H1 (cell line): ENCODE measurements at regions of chr20 and their contacts with region 1.

Region 1: GRCh38 chr20:58209652-58210397 is 18.6 kb downstream of the ANKRD60 start:
- DNase-seq: peak in 1 of 2 experiments; percentile 98
- H3K4me3 ChIP-seq: peak overlapping the region in 1 of 4 experiments; percentile 42; a peak in 2 of 8 replicates
- H3K27ac ChIP-seq: no peak overlapping the region
- H3K4me1 ChIP-seq: no peaks in the 10 kb centered on the region
- H3K27me3 ChIP-seq: no peaks in the 10 kb centered on the region; a peak in 4 of 7 replicates
- CTCF ChIP-seq: peak; percentile 100
- EP300 ChIP-seq: no peak
- POLR2A ChIP-seq: no peak
- RAD21 ChIP-seq: peak; percentile 98 to 99

Region 2: GRCh38 chr20:57622579-57623377 is 587.0 kb before region 1 on chr20:
- CTCF ChIA-PET with region 1: interaction called, 28 read pairs
- POLR2A ChIA-PET with region 1: no interaction called
- DNase-seq: peak; percentile 38 to 90
- H3K4me3 ChIP-seq: no peak overlapping the region
- H3K27ac ChIP-seq: no peak overlapping the region
- H3K4me1 ChIP-seq: no peaks in the 10 kb centered on the region
- H3K27me3 ChIP-seq: no peaks in the 10 kb centered on the region
- CTCF ChIP-seq: peak; percentile 93 to 98 (median 95)
- EP300 ChIP-seq: no peak
- POLR2A ChIP-seq: no peak
- RAD21 ChIP-seq: peak; percentile 96 to 97

Region 3: GRCh38 chr20:58058421-58059259 is 151.2 kb before region 1 on chr20:
- CTCF ChIA-PET with region 1: interaction called, 10 read pairs
- POLR2A ChIA-PET with region 1: no interaction called
- DNase-seq: peak in 1 of 2 experiments; percentile 33
- H3K4me3 ChIP-seq: no peak overlapping the region
- H3K27ac ChIP-seq: no peak overlapping the region
- H3K4me1 ChIP-seq: peaks cover 0 to 7% (median 2%) of the 10 kb centered on the region in 4 experiments; a peak in 3 of 7 replicates
- H3K27me3 ChIP-seq: no peaks in the 10 kb centered on the region
- CTCF ChIP-seq: no peak
- EP300 ChIP-seq: no peak
- POLR2A ChIP-seq: no peak
- RAD21 ChIP-seq: no peak

Region 4: GRCh38 chr20:58179432-58180099 is 30.3 kb before region 1 on chr20:
- CTCF ChIA-PET with region 1: interaction called, 27 read pairs
- POLR2A ChIA-PET with region 1: no interaction called
- DNase-seq: peak; percentile 10 to 92
- H3K4me3 ChIP-seq: peak overlapping the region in 3 of 4 experiments; percentile 12 to 54 (median 29); a peak in 5 of 8 replicates
- H3K27ac ChIP-seq: no peak overlapping the region
- H3K4me1 ChIP-seq: peaks cover 0 to 6% (median 4%) of the 10 kb centered on the region in 4 experiments; a peak in 3 of 7 replicates
- H3K27me3 ChIP-seq: peaks cover 2 to 19% (median 14%) of the 10 kb centered on the region in 4 experiments; a peak in 6 of 7 replicates
- CTCF ChIP-seq: peak; percentile 88 to 92 (median 89)
- EP300 ChIP-seq: no peak
- POLR2A ChIP-seq: no peak
- RAD21 ChIP-seq: peak; percentile 91 to 93

Region 5: DNA sequence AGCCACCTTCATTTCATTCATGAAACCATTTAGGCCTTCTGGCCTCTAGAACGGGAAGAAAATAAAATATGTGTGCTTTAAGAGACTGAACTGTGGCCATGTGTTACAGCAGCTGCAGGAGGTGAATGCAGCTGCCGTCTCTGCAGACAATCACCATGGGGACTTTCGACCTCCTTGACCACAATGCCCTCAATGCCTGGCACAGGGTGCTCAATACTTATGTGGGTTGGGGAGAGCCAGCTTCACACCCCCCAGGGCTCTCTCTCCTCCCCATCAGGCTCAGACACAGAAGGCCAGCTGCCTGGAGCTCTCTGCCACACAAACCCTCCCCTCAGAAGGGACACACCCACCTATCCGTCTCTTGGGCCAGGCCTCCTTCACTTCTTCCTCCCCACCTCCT is 24.8 kb before region 1 on chr20:
- CTCF ChIA-PET with region 1: interaction called, 130 read pairs
- POLR2A ChIA-PET with region 1: no interaction called
- DNase-seq: no peak
- H3K4me3 ChIP-seq: no peak overlapping the region
- H3K27ac ChIP-seq: no peak overlapping the region
- H3K4me1 ChIP-seq: no peaks in the 10 kb centered on the region
- H3K27me3 ChIP-seq: peaks cover 0 to 3% (median 1%) of the 10 kb centered on the region in 4 experiments; a peak in 2 of 7 replicates
- CTCF ChIP-seq: no peak
- EP300 ChIP-seq: no peak
- POLR2A ChIP-seq: no peak
- RAD21 ChIP-seq: no peak

Region 6: GRCh38 chr20:58192567-58192966 is 17.3 kb before region 1 on chr20:
- CTCF ChIA-PET with region 1: interaction called, 130 read pairs
- POLR2A ChIA-PET with region 1: no interaction called
- DNase-seq: peak in 1 of 2 experiments; percentile 87
- H3K4me3 ChIP-seq: no peak overlapping the region
- H3K27ac ChIP-seq: no peak overlapping the region
- H3K4me1 ChIP-seq: no peaks in the 10 kb centered on the region
- H3K27me3 ChIP-seq: no peaks in the 10 kb centered on the region
- CTCF ChIP-seq: peak; percentile 79 to 96 (median 81)
- EP300 ChIP-seq: no peak
- POLR2A ChIP-seq: no peak
- RAD21 ChIP-seq: peak; percentile 73 to 79

Region 7: DNA sequence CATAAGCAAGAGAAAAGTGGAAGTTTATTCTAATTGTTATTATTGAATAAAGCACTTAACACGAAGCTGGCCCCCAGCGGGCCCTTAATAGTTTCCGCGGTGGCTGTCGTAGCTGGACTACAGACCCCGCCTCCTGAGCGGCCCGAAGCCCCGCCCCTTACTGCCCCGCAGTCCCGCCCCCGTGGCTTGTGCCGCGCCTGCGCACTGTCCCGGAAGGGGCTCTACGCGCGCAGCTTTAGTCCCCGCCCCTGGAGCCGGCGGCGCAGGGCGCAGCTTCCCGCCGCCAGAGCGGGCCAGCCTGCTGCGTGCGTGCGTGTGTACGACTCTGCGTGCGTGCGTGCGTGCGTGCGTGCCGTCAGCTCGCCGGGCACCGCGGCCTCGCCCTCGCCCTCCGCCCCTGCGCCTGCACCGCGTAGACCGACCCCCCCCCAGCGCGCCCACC is 179.1 kb after region 1 on chr20 and contains the start of gene VAPB:
- CTCF ChIA-PET with region 1: no interaction called
- POLR2A ChIA-PET with region 1: no interaction called
- DNase-seq: peak; percentile 94 to 99
- H3K4me3 ChIP-seq: peak within 1 kb of the TSS; percentile 55 to 79 (median 68)
- H3K27ac ChIP-seq: peak within 1 kb of the TSS; percentile 81; the same call in 1 of the 2 replicates
- H3K4me1 ChIP-seq: peaks cover 5 to 9% (median 6%) of the 10 kb centered on the region in 4 experiments; a peak in 6 of 7 replicates
- H3K27me3 ChIP-seq: no peaks in the 10 kb centered on the region
- CTCF ChIP-seq: peak in 1 of 3 experiments; percentile 4; a peak in 1 of 4 replicates
- EP300 ChIP-seq: no peak
- POLR2A ChIP-seq: peak in 1 of 2 experiments; percentile 59; a peak in 1 of 3 replicates
- RAD21 ChIP-seq: no peak
- total RNA-seq, gene VAPB: 57.1 and 62.8 TPM in 2 replicates